ENCODE measurements at regions of chr10 and their contacts with region 1.

Region 1: DNA sequence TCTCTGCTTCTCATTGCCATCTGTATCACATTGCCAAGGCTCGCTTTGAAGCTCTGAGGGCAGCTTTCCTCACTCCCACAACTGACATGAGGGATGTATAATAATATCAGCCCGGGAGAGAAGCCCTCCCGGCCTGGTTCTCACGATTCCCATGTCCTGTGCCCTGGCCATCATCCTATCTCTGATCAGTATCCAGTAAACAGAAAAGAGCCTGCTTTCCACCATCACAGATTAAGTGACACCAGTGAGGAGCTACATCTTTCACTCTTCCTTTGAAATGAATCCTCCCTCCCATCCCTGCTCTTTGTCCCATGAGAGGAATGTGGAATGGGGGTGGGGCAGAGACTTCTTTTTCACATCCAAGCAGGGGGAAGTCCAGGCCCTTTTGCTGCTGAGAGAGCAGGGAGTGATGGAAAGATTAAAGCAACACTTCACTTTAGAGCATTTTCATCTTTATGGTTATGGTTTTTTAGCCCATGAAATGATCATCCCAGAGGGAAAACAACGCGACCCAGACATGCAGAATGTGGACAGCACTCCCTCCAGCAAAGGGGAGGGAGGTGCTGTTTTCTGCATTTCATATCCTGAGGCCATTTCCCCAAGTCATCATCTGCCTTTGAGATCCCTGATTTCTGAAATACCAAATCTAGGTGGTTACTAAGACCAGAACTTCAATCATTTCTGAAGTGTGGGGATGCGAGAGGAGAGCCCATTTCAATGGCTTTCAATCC is 84.6 kb upstream of the LYZL1 start:
- DNase-seq: no peak
- H3K4me3 ChIP-seq: no peak overlapping the region
- CTCF ChIP-seq: no peak

Region 2: DNA sequence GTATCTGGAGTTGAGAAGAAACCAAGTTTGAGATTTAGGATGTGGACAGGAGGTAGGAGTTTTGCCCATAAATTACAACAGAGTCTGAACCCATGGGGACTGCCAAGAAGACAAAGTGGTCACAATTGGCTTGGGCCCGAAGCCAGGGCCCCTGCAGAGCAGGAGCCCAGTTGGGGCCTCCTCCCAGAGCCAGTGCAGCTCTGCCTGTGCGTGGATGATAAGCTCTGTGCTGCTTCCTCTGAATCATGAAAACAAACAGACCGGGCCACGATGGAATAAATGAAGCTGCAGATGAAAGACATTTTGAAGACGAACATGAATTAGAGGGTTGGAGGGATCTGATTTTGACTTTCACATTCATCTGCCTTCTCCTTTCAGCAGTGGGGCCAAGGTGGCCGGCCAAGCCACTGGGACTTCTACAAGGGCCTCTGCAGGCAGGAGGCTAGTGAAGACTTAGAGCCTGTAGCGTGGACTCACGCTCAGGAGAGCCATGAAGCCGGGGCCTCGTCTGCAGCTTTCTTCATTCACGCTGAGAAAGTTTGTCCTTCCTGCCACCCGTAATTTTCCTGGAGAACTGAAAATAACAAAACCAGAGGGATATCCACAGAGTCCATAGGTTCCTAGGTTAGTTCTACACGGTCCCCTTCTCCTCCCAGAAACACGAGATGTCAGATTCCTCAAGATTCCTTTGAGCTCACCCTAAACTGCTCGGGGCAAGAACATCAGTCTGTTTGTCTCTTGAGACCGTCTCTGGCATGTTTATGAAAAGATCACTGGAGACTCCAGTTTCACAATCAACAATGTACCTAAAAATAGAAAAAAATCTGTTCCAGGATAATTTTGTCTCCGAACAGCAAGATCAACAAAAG is 72.0 kb before region 1 on chr10:
- in situ Hi-C with region 1: loop called (anchors 5 kb)
- DNase-seq: no peak
- H3K4me3 ChIP-seq: no peak overlapping the region
- CTCF ChIP-seq: no peak

Region 3: GRCh38 chr10:29150003-29150402 is 54.2 kb before region 1 on chr10:
- in situ Hi-C with region 1: no loop called
- DNase-seq: no peak
- H3K4me3 ChIP-seq: no peak overlapping the region
- CTCF ChIP-seq: no peak

Region 4: GRCh38 chr10:29254123-29255046 is 50.1 kb after region 1 on chr10:
- in situ Hi-C with region 1: loop called (anchors 5 kb)
- DNase-seq: no peak
- H3K4me3 ChIP-seq: no peak overlapping the region
- CTCF ChIP-seq: no peak

Measured in astrocyte of the cerebellum (primary cell).